GM18951 (cell line): ENCODE measurements at regions of chr7 and their contacts with region 1.

Region 1: DNA sequence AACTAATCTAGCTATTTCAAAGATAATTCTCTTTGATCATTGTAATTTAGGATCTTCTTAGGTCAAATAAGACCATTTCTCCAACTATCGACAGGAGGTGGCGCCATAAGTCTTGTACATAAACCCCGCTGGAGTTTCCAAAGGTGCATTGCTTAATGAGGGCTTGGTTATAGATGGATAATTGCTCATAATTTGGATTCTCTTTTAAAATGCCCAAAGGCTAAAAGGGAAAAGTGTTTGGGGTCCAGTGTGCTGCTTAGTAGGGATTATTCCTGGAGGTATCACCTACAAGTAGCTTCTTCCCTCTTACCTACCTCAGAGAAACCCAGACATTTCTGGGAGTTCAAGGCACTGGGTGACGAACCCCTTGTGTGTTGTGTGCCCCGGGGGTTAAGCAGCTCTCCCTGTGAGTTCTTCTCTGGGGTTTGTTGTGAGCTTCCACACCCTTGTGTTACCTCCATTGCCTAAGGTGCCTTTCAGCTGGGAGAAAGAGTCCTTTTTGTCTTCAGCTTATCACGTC is 75.2 kb downstream of the PAXIP1 start:
- POLR2A ChIP-seq: no peak

Region 2: GRCh38 chr7:155344600-155345433 is 417.1 kb after region 1 on chr7:
- in situ Hi-C with region 1: loop called (anchors 25 kb)
- POLR2A ChIP-seq: no peak